ENCODE measurements at regions of chr17 and their contacts with region 1.

Region 1: GRCh38 chr17:40026816-40027613 is 11.8 kb downstream of the CSF3 start:
- DNase-seq: peak; percentile 82
- H3K4me3 ChIP-seq: no peak overlapping the region
- H3K27ac ChIP-seq: peak overlapping the region; percentile 5 to 52
- H3K4me1 ChIP-seq: peaks cover 20% of the 10 kb centered on the region
- H3K27me3 ChIP-seq: no peaks in the 10 kb centered on the region
- CTCF ChIP-seq: peak; percentile 89 to 93 (median 91)
- POLR2A ChIP-seq: no peak

Region 2: DNA sequence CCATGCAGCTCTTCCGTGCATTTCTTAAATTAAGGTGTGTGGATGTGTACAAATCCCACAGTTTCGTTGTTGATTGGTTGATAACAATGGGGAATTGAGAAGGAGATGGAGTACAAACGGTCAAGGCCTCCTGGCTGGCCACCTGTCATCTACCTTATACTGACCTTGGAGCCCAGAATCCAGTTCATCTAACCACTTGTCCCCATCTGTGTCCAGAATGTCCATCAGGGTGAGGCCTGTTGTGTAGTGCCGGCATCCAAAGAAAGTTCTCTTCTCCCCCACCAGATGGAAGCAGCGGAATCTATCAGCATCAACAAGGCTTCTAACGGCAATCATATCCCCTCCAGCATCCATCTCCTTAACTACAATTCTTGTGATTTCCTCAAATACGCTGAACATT is 110.1 kb before region 1 on chr17:
- intact Hi-C with region 1: no loop called
- DNase-seq: no peak
- H3K4me3 ChIP-seq: no peak overlapping the region
- H3K27ac ChIP-seq: no peak overlapping the region
- H3K4me1 ChIP-seq: no peaks in the 10 kb centered on the region
- H3K27me3 ChIP-seq: no peaks in the 10 kb centered on the region
- CTCF ChIP-seq: no peak
- POLR2A ChIP-seq: no peak

Region 3: DNA sequence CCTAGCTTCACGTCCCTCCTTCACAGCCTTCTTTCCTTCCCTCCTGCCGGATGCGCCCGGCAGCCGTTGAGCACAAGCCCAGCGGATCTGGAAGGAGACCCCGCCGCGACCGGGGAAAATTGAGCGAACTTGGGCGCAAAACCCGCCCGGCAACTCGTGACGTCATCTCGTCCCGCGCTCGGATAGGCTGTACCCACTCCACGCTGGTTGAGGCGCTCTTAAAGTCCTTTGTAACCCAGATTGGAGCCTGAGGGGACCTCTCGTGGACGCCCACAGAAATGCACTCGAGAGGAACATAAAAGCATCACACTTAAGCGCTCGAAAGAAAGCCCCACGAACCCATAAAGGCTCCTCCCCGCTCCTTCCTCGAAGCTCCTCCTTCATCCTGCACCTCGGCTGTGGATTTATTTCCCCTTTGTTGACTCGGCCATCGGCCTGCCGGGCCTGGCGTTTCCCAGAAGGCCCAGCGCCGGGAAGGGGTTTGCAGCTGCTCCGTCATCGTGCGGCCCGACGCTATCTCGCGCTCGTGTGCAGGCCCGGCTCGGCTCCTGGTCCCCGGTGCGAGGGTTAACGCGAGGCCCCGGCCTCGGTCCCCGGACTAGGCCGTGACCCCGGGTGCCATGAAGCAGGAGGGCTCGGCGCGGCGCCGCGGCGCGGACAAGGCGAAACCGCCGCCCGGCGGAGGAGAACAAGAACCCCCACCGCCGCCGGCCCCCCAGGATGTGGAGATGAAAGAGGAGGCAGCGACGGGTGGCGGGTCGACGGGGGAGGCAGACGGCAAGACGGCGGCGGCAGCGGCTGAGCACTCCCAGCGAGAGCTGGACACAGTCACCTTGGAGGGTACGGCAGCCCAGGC is 46.4 kb before region 1 on chr17 and contains the start of gene PSMD3:
- intact Hi-C with region 1: no loop called
- DNase-seq: peak; percentile 100
- H3K4me3 ChIP-seq: peak within 1 kb of the TSS; percentile 85 to 88
- H3K27ac ChIP-seq: peak within 1 kb of the TSS; percentile 82 to 86
- H3K4me1 ChIP-seq: no peaks in the 10 kb centered on the region
- H3K27me3 ChIP-seq: no peaks in the 10 kb centered on the region
- CTCF ChIP-seq: peak; percentile 33 to 99 (median 92)
- POLR2A ChIP-seq: peak; percentile 87
- total RNA-seq, gene PSMD3: 96.4 to 116 TPM

Region 4: GRCh38 chr17:40075201-40075941 is 48.4 kb after region 1 on chr17:
- intact Hi-C with region 1: loop called (anchors 5 kb)
- DNase-seq: peak; percentile 85
- H3K4me3 ChIP-seq: no peak overlapping the region
- H3K27ac ChIP-seq: peak overlapping the region; percentile 89 to 93
- H3K4me1 ChIP-seq: peaks cover 56% of the 10 kb centered on the region
- H3K27me3 ChIP-seq: no peaks in the 10 kb centered on the region
- CTCF ChIP-seq: peak; percentile 88 to 93 (median 92)
- POLR2A ChIP-seq: peak; percentile 20

Region 5: DNA sequence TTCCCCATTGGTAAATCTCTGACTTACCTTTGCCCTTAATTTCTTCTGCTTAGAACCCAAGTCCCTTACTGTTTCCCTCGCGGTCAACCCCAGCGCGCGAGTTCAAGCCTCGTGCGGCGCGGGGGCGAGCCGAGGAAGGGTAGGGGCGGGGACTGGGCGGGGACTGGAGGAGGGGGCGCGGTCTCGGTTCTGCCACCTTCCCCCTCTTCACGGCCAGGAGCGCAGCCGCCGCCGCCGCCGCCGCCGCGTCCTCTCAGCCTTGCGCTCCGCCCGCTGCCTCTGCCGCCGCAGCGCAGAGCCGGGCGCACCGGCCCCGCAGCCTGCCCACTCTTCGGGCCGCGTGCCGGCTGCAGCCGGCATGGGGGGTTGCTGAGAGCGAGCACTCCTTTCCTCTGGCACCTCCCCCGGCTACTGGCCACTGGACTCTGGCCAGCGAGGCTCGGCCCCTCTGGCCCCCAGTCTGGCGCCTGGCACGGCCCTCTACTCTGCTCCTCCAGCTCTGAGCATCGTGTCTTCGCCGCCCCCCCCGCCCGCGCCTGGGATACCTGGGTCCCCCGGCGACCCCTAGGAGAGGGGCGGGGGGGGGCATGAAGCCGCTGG is 150.4 kb after region 1 on chr17 and contains the start of gene RAPGEFL1:
- intact Hi-C with region 1: loop called (anchors 5 kb)
- DNase-seq: peak; percentile 77
- H3K4me3 ChIP-seq: peak within 1 kb of the TSS; percentile 45 to 50
- H3K27ac ChIP-seq: peak within 1 kb of the TSS; percentile 66 to 67
- H3K4me1 ChIP-seq: peaks cover 7% of the 10 kb centered on the region
- H3K27me3 ChIP-seq: no peaks in the 10 kb centered on the region
- CTCF ChIP-seq: no peak
- POLR2A ChIP-seq: peak; percentile 86
- total RNA-seq, gene RAPGEFL1: 14.2 to 25.1 TPM

Measured in prostate gland (tissue), 2 donors.